Activated CD8-positive, alpha-beta T cell treated with anti-CD3 and anti-CD28 coated beads for 36 hours (primary cell): ENCODE measurements at regions of chr2 and their contacts with region 1.

Region 1: GRCh38 chr2:1550658-1551316 is 137.5 kb downstream of the TPO start:
- DNase-seq: peak; percentile 65
- ATAC-seq: peak; percentile 80
- H3K4me3 Mint-ChIP-seq: no peak overlapping the region
- H3K27ac Mint-ChIP-seq: no peak overlapping the region
- H3K4me1 Mint-ChIP-seq: peaks cover 3% of the 10 kb centered on the region
- H3K27me3 Mint-ChIP-seq: peaks cover 7% of the 10 kb centered on the region
- CTCF ChIP-seq: peak; percentile 95

Region 2: DNA sequence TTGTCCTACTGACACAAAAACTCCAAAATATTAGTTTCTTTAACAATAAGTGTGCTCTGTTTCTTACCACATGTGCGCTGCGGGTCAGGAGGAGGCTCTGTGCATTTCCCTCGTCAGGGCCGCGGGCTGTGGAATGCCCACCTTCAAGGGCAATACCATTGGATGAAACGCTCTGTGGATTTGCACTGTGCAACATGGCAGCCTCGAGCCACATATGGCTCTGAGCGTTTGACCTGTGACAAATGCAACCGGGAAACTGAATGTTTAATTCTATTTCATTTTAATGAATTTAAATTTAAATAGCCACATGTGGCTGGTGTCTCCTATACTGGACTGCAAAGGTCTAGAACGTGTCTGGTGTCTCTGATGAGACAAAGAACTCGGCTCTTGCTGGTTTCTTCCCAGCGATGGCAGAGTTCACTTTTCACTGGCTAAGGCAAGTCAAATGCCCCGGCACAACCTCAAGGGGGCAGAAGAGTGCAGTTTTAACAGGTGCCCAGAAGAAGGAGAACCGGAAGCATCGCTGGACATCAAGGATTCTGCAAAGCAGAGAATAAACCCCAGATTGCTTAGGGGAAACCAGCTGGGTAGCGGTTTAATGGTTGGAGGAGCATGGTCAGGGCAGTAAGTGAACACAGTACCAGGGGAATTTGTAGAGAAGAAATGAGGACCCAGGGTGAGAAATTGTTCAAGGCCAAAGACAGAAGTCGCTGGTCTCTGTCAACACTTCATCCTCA is 836.6 kb before region 1 on chr2:
- CTCF ChIA-PET with region 1: interaction called, 6 read pairs
- POLR2A ChIA-PET with region 1: no interaction called
- intact Hi-C with region 1: loop called (anchors 10 kb)
- DNase-seq: peak; percentile 69
- ATAC-seq: peak; percentile 70
- H3K4me3 Mint-ChIP-seq: no peak overlapping the region
- H3K27ac Mint-ChIP-seq: no peak overlapping the region
- H3K4me1 Mint-ChIP-seq: no peaks in the 10 kb centered on the region
- H3K27me3 Mint-ChIP-seq: peaks cover 19% of the 10 kb centered on the region
- CTCF ChIP-seq: peak; percentile 55

Region 3: GRCh38 chr2:854460-854859 is 696.3 kb before region 1 on chr2:
- CTCF ChIA-PET with region 1: interaction called, 4 read pairs
- POLR2A ChIA-PET with region 1: no interaction called
- intact Hi-C with region 1: loop called (anchors 10 kb)
- DNase-seq: peak; percentile 70
- ATAC-seq: no peak
- H3K4me3 Mint-ChIP-seq: no peak overlapping the region
- H3K27ac Mint-ChIP-seq: no peak overlapping the region
- H3K4me1 Mint-ChIP-seq: peaks cover 16% of the 10 kb centered on the region
- H3K27me3 Mint-ChIP-seq: no peaks in the 10 kb centered on the region
- CTCF ChIP-seq: peak; percentile 66

Region 4: DNA sequence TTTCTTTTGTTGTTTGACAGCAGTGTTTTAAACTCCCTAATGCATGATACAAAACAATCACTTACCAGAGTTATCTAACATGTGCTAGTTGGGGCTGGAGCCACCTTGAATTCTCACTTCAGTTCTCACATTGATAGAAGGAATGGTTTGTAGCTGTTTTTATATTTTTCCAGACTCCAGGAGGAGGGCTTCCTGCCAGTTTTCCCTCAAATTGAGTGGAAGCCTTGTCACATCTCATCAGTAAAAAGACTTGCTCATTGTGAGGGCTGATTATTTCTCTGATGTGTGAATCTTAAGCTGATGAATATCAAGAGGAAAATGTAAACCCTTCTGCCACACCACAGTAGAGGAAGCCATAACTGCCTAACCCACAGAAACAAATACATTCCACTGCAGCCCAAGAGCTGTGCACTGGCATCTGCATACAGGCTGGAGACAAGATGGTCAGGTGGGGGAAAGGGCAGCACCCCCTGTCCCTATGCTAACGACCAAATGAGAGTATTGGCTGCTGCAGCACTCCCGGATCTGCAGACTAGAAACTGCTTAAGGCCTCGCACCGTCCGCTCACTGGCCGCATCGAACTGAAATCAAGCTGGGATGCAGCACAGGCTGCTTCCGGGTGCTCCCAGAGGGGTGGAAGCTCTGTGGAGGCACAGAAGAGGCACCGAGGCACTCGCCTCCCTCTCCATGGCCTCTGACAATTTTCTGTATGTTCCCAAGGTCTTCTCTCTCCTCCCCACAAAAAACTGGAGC is 211.2 kb before region 1 on chr2:
- CTCF ChIA-PET with region 1: no interaction called
- POLR2A ChIA-PET with region 1: no interaction called
- intact Hi-C with region 1: no loop called
- DNase-seq: no peak
- ATAC-seq: no peak
- H3K4me3 Mint-ChIP-seq: no peak overlapping the region
- H3K27ac Mint-ChIP-seq: no peak overlapping the region
- H3K4me1 Mint-ChIP-seq: no peaks in the 10 kb centered on the region
- H3K27me3 Mint-ChIP-seq: no peaks in the 10 kb centered on the region
- CTCF ChIP-seq: no peak

Region 5: GRCh38 chr2:1518867-1519530 is 31.8 kb before region 1 on chr2:
- CTCF ChIA-PET with region 1: interaction called, 16 read pairs
- POLR2A ChIA-PET with region 1: no interaction called
- intact Hi-C with region 1: no loop called
- DNase-seq: no peak
- ATAC-seq: no peak
- H3K4me3 Mint-ChIP-seq: no peak overlapping the region
- H3K27ac Mint-ChIP-seq: peak overlapping the region; percentile 54
- H3K4me1 Mint-ChIP-seq: peaks cover 19% of the 10 kb centered on the region
- H3K27me3 Mint-ChIP-seq: no peaks in the 10 kb centered on the region
- CTCF ChIP-seq: no peak

Region 6: DNA sequence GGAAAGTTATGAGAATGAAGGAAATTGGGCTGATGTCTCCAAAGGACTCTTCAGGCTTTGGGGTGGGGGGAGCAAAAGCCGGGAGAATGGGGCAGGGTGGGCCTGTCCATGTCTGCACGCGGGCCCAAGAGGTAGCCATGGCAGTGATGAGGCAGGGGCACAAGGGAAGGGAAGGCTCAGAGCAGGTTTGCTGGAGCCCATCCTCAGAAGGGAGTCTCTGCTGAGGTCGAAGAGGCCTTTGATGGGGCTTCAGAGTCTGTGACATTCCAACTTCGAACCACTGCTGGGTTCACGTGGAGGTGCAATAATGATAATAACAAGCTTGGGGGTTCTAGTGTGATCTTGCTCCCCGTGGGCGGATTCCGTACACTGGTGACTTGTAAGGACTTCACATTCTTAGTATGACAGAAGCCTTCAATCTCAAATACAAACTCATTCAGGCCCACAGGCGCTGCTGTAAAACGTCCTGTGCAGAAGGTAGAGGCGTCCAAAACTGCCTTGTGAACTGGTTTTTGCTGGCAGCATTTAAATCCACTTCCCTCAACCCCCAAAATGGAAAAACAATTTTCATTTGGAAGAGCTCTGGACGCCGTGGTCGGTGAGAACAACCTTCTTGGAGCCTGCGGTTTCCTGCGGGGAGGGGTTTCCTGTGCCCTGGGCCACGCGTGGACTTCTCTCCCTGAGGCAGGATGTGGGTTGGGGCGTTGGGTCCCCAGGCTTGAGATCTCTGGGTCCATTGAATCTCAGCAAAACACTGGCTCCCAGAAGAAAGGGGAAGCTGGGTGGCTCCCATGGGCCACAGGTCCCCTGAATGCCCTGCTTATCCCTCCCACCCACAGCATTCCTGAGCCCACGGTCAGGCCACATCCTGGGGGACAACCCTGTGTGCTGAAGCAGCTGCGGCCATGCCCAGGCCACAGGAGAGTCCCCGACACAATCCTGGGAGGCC is 13.4 kb after region 1 on chr2:
- CTCF ChIA-PET with region 1: interaction called, 22 read pairs
- POLR2A ChIA-PET with region 1: no interaction called
- intact Hi-C with region 1: no loop called
- DNase-seq: peak; percentile 27
- ATAC-seq: no peak
- H3K4me3 Mint-ChIP-seq: no peak overlapping the region
- H3K27ac Mint-ChIP-seq: no peak overlapping the region
- H3K4me1 Mint-ChIP-seq: peaks cover 13% of the 10 kb centered on the region
- H3K27me3 Mint-ChIP-seq: no peaks in the 10 kb centered on the region
- CTCF ChIP-seq: no peak